ENCODE measurements at regions of chr12 and their contacts with region 1.

Region 1: GRCh38 chr12:123365025-123365917 is 624 bp upstream of the SBNO1 start:
- DNase-seq: peak; percentile 99 to 100
- ATAC-seq: peak; percentile 84 to 86
- H3K4me3 ChIP-seq: peak overlapping the region; percentile 96
- H3K27ac ChIP-seq: peak overlapping the region; percentile 93 to 98
- H3K4me1 ChIP-seq: peaks cover 14% of the 10 kb centered on the region
- CTCF ChIP-seq: peak; percentile 84
- EP300 ChIP-seq: no peak
- POLR2A ChIP-seq: peak; percentile 56
- RAD21 ChIP-seq: peak; percentile 63 to 67; a peak in 4 of 5 replicates

Region 2: GRCh38 chr12:123271001-123271729 is 94.1 kb before region 1 on chr12:
- CTCF ChIA-PET with region 1: interaction called, 11 read pairs
- POLR2A ChIA-PET with region 1: no interaction called
- DNase-seq: peak; percentile 57 to 76
- ATAC-seq: peak; percentile 70 to 86
- H3K4me3 ChIP-seq: peak overlapping the region; percentile 94
- H3K27ac ChIP-seq: peak overlapping the region; percentile 96 to 100
- H3K4me1 ChIP-seq: peaks cover 16% of the 10 kb centered on the region
- CTCF ChIP-seq: peak; percentile 71
- EP300 ChIP-seq: no peak
- POLR2A ChIP-seq: no peak; the same call in 1 of the 2 replicates
- RAD21 ChIP-seq: peak; percentile 55 to 74

Region 3: GRCh38 chr12:123384318-123384993 is 19.2 kb after region 1 on chr12:
- CTCF ChIA-PET with region 1: interaction called, 25 read pairs
- POLR2A ChIA-PET with region 1: interaction called, 71 read pairs
- DNase-seq: peak in 1 of 2 experiments; percentile 42
- ATAC-seq: peak; percentile 16 to 26
- H3K4me3 ChIP-seq: peak overlapping the region; percentile 60
- H3K27ac ChIP-seq: peak overlapping the region; percentile 63 to 93
- H3K4me1 ChIP-seq: peaks cover 26% of the 10 kb centered on the region
- CTCF ChIP-seq: 0 out of 3 replicates have a peak, but pooled peaks have one; percentile 9
- EP300 ChIP-seq: no peak
- POLR2A ChIP-seq: no peak
- RAD21 ChIP-seq: no peak

Region 4: DNA sequence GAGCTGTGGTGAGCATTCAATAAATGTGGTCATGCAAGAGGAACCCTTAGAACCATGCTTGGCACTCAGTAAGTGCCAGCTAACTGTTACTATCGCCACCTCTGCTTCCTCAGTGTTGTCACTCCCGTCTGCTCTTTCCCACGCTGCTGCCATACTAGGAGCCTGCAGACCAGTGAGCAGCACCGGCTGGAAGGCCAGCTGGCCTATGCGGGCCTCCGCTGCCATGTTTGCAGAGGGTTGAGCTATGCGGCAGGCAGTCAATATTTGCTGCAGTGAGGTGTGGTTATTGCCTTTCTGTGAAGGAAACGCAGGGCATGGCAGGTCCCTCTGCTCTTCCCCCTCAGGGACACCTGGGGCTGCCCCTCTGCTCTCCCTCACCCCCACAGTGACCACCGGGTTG is 31.7 kb after region 1 on chr12:
- CTCF ChIA-PET with region 1: no interaction called
- POLR2A ChIA-PET with region 1: no interaction called
- DNase-seq: no peak
- ATAC-seq: no peak
- H3K4me3 ChIP-seq: no peak overlapping the region
- H3K27ac ChIP-seq: no peak overlapping the region
- H3K4me1 ChIP-seq: no peaks in the 10 kb centered on the region
- CTCF ChIP-seq: no peak
- EP300 ChIP-seq: no peak
- POLR2A ChIP-seq: no peak
- RAD21 ChIP-seq: no peak

Measured in A549 (cell line).